Adrenal gland (tissue), 19 donors: ENCODE measurements at regions of chrX and their contacts with region 1.

Region 1: GRCh38 chrX:129900054-129900453 is 5.9 kb upstream of the UTP14A start:
- DNase-seq: no peak
- H3K4me3 ChIP-seq: no peak overlapping the region
- H3K27ac ChIP-seq: no peak overlapping the region
- H3K4me1 ChIP-seq: no peaks in the 10 kb centered on the region
- H3K27me3 ChIP-seq: peaks cover 7% of the 10 kb centered on the region
- CTCF ChIP-seq: no peak
- POLR2A ChIP-seq: no peak

Region 2: DNA sequence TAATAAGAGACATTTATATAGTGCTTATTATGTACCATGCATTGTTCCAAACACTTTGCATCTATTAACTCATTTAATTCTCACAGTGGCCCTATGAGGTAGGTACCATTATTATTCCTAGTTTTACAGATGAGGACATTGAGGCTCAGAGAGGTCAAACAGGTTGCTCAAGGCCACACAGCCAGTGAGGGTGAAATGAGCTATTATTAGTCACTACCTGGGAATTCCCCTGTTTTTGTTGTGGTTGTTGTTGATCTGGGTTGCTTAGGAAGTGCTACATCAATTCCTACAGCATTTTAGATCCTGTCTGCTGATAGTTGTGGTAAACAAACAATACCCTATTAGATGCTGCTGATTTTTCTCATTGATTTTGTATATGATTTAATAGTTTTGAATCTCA is 286.5 kb before region 1 on chrX:
- intact Hi-C with region 1: loop called in 1 of 2 experiments (anchors 10 kb)
- DNase-seq: no peak
- H3K4me3 ChIP-seq: no peak overlapping the region
- H3K27ac ChIP-seq: no peak overlapping the region
- H3K4me1 ChIP-seq: no peaks in the 10 kb centered on the region
- H3K27me3 ChIP-seq: no peaks in the 10 kb centered on the region
- CTCF ChIP-seq: no peak
- POLR2A ChIP-seq: no peak